Activated CD4-positive, alpha-beta T cell treated with anti-CD3 and anti-CD28 coated beads, Interleukin-2, amount 10 ng/mL, durations not matched to agents 24 days and 14 days (primary cell): ENCODE measurements at regions of chr2 and their contacts with region 1.

Region 1: DNA sequence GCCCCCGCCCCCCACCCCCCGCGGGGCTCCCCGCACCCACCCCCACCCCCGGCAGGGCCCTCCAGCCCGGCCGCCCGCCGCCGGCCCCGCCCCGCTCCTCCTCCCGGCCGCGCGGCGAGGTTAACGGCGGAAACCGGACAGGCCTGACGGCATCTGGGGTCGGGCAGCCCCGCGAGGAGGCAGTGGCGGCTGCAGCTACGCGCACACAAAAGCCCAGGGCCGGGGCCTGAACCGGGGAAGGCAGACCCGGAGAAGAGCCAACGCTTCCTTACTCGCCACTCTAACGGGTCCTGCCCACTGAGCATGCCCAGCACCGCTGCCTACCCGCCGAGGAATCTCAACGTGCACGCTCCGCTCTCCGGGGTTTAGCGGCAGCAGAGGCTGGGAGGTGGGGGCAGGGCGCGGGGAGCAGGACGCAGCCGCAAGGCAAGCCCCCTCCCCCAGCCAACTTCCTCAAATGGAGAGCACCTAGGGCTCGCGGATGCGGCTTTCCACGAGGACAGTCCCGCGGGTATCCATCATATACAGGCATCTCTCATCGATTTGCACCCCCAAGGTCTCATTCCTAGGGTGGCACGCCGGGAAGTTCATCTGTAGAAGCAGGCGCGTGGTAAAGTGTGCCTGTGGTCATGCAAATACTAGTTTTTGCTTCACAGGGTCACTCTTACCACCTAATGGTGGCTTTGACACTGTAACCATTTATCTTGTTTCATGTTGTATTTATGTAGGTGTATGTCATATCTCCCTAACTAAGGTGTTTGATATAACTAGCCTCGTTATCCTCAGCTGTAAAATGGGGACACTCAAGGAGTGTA is at the start of gene MEMO1:
- DNase-seq: peak; percentile 98
- H3K4me3 Mint-ChIP-seq: peak within 1 kb of the TSS; percentile 90
- H3K27ac Mint-ChIP-seq: peak within 1 kb of the TSS; percentile 96
- H3K4me1 Mint-ChIP-seq: peaks cover 33% of the 10 kb centered on the region
- H3K27me3 Mint-ChIP-seq: no peaks in the 10 kb centered on the region
- total RNA-seq, gene MEMO1: 64.0 and 65.8 TPM in 2 replicates

Region 2: GRCh38 chr2:31886697-31887096 is 124.2 kb before region 1 on chr2:
- intact Hi-C with region 1: loop called (anchors 5 kb)
- DNase-seq: no peak
- H3K4me3 Mint-ChIP-seq: no peak overlapping the region
- H3K27ac Mint-ChIP-seq: no peak overlapping the region
- H3K4me1 Mint-ChIP-seq: no peaks in the 10 kb centered on the region
- H3K27me3 Mint-ChIP-seq: no peaks in the 10 kb centered on the region

Region 3: GRCh38 chr2:31962757-31963361 is 48.0 kb before region 1 on chr2:
- intact Hi-C with region 1: no loop called
- DNase-seq: peak; percentile 73
- H3K4me3 Mint-ChIP-seq: no peak overlapping the region
- H3K27ac Mint-ChIP-seq: peak overlapping the region; percentile 8
- H3K4me1 Mint-ChIP-seq: peaks cover 43% of the 10 kb centered on the region
- H3K27me3 Mint-ChIP-seq: no peaks in the 10 kb centered on the region

Region 4: DNA sequence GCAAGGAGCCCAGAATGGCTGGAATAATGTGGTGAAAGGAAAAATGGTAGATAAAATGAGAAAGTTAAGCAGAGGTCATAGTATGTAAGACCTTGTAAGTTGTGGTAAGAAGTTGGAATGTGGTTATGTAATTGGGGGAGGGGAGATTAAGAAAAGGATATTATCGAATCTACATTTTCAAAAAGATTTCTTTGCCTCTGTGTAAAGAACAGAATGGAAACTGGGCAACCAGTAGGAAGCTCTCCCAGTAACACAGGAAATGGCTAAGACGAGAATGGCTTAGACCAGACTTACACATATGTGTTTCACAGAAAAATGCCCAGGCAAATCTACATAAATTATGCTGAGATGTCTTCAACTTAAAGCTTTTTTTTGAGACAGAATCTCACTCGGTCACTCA is 13.2 kb before region 1 on chr2:
- intact Hi-C with region 1: loop called (anchors 1 kb)
- DNase-seq: no peak
- H3K4me3 Mint-ChIP-seq: no peak overlapping the region
- H3K27ac Mint-ChIP-seq: no peak overlapping the region
- H3K4me1 Mint-ChIP-seq: peaks cover 35% of the 10 kb centered on the region
- H3K27me3 Mint-ChIP-seq: no peaks in the 10 kb centered on the region

Region 5: GRCh38 chr2:32063310-32064161 is 52.7 kb after region 1 on chr2 and contains the start of gene SPAST:
- intact Hi-C with region 1: loop called (anchors 1 kb)
- DNase-seq: peak; percentile 99
- H3K4me3 Mint-ChIP-seq: peak within 1 kb of the TSS; percentile 97
- H3K27ac Mint-ChIP-seq: peak within 1 kb of the TSS; percentile 95
- H3K4me1 Mint-ChIP-seq: peaks cover 21% of the 10 kb centered on the region
- H3K27me3 Mint-ChIP-seq: peaks cover 2% of the 10 kb centered on the region
- total RNA-seq, gene SPAST: 19.5 and 20.9 TPM in 2 replicates

Region 6: DNA sequence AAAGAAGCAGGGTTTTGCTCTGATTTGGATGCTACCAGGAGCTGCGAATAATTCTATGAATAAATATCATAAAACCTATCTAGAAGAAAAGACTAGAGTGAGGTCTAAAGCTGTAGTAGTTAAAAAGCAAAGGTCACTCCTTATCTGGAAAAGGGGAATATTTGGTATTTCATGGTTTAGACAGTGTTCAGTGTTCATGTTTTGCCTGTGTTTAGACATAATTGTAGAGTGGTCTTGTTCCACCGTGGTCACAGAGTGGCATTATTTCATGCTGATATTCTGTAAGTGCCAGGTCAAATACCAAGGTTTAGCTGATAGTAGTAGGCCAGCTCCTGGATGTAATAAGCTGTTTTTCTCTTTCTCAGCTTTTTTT is 63.2 kb after region 1 on chr2:
- intact Hi-C with region 1: no loop called
- DNase-seq: no peak
- H3K4me3 Mint-ChIP-seq: no peak overlapping the region
- H3K27ac Mint-ChIP-seq: no peak overlapping the region
- H3K4me1 Mint-ChIP-seq: peaks cover 2% of the 10 kb centered on the region
- H3K27me3 Mint-ChIP-seq: no peaks in the 10 kb centered on the region

Region 7: GRCh38 chr2:32356735-32357644 is 346.1 kb after region 1 on chr2 and contains the start of gene BIRC6:
- intact Hi-C with region 1: loop called (anchors 2 kb)
- DNase-seq: peak; percentile 98
- H3K4me3 Mint-ChIP-seq: peak within 1 kb of the TSS; percentile 92
- H3K27ac Mint-ChIP-seq: peak within 1 kb of the TSS; percentile 96
- H3K4me1 Mint-ChIP-seq: peaks cover 31% of the 10 kb centered on the region
- H3K27me3 Mint-ChIP-seq: no peaks in the 10 kb centered on the region
- total RNA-seq, gene BIRC6: 101 and 105 TPM in 2 replicates